PC-9 (cell line): ENCODE measurements at regions of chr3 and their contacts with region 1.

Region 1: GRCh38 chr3:196016485-196016884 is 65.4 kb downstream of the TFRC start:
- DNase-seq: peak; percentile 38 to 67
- H3K4me3 ChIP-seq: no peak overlapping the region
- H3K27ac ChIP-seq: no peak overlapping the region
- H3K4me1 ChIP-seq: peaks cover 18% of the 10 kb centered on the region
- H3K27me3 ChIP-seq: no peaks in the 10 kb centered on the region
- CTCF ChIP-seq: no peak

Region 2: DNA sequence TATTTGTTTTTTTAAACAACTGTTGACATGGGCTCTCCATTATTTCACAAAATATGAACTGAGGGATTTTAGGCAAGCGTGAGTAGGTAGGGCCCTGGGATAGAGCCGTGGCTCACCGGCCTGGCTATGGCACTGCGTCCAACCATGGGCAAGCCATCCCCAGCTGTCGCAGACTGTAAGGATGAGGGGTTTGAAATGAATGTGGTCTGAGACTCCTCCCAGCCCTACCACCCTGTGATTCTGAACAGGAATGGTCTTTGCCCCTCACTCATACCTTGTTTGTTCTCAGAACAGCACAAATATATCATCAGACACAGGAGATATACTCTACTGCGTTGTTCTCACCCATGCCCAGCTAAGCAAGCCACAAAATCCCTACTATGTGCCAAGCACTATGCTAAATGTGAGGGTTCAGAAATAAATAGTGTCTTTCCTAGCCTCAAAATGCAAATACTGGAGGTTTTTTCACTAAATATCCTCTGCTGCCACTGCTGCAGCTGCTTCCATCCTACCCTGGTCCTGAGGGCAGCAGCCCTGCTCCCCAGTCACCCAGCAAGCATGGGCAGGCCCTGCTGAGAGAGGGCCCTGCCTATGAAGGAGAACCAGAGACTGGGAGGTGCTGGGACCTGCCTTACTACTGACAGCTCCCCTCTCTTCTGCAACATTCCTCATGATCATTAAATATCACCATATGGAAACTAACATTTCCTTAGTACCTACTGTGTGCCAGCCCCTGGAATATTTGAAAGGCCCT is 848.3 kb before region 1 on chr3:
- CTCF ChIA-PET with region 1: no interaction called
- POLR2A ChIA-PET with region 1: interaction called, 12 read pairs
- intact Hi-C with region 1: no loop called
- DNase-seq: no peak
- H3K4me3 ChIP-seq: no peak overlapping the region
- H3K27ac ChIP-seq: no peak overlapping the region
- H3K4me1 ChIP-seq: no peaks in the 10 kb centered on the region
- H3K27me3 ChIP-seq: no peaks in the 10 kb centered on the region
- CTCF ChIP-seq: no peak

Region 3: DNA sequence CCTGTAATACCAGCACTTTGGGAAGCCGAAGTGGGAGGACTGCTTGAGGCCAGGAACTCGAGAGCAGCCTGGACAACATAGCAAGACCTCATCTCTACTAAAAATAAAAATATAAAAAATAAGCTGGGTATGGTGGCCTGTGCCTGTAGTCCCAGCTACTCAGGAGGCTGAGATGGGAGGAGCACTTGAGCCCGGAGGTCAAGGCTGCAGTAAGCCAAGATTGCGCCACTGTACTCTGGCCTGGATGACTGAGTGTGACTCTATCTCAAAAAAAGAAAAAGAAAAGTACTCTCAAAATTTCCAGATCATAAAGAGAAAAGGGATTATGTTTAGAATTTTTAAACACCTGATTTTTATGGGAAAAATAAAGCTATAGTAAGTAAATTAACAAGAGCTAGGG is 223.9 kb after region 1 on chr3:
- CTCF ChIA-PET with region 1: interaction called, 10 read pairs
- POLR2A ChIA-PET with region 1: no interaction called
- intact Hi-C with region 1: no loop called
- DNase-seq: no peak
- H3K4me3 ChIP-seq: no peak overlapping the region
- H3K27ac ChIP-seq: no peak overlapping the region
- H3K4me1 ChIP-seq: no peaks in the 10 kb centered on the region
- H3K27me3 ChIP-seq: no peaks in the 10 kb centered on the region
- CTCF ChIP-seq: no peak